ENCODE measurements at regions of chr7 and their contacts with region 1.

Region 1: GRCh38 chr7:135170274-135170997 is at the start of gene CYREN:
- DNase-seq: peak; percentile 97
- ATAC-seq: peak; percentile 94 to 97
- total RNA-seq, gene CYREN: 25.9 to 28.8 TPM

Region 2: DNA sequence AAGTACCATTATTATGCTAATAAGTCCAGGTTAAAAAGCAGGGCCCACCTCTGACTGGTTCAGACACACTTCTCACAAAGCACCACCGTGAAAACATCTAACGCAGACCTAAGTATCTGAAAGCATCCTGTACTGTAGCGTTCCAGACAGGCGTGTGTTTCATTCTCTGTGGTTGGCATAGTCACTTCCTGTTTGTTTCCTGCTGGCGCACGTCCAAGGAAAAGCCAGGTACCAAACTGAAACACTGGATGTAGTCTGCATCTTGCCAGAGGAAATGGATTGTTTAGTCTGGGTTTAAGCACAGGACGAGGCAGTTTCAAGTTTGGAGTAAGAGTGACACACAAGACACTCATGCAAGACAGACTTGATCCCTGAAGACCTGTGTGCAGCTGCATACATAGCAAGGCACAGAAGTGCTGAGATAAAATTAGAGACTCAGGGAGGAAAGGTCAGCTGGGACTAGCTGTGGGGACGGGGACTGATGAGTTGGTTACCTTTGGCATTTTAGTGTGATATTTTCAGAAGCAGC is 500.5 kb before region 1 on chr7:
- intact Hi-C with region 1: loop called in 1 of 2 experiments (anchors 10 kb)
- DNase-seq: peak; percentile 62
- ATAC-seq: peak; percentile 70 to 72

Region 3: GRCh38 chr7:134986363-134987251 is 183.8 kb before region 1 on chr7 and contains the start of gene AGBL3:
- intact Hi-C with region 1: loop called (anchors 2 to 10 kb)
- DNase-seq: peak; percentile 99
- ATAC-seq: peak; percentile 99
- total RNA-seq, gene AGBL3: 1.7 to 2.1 TPM

Region 4: DNA sequence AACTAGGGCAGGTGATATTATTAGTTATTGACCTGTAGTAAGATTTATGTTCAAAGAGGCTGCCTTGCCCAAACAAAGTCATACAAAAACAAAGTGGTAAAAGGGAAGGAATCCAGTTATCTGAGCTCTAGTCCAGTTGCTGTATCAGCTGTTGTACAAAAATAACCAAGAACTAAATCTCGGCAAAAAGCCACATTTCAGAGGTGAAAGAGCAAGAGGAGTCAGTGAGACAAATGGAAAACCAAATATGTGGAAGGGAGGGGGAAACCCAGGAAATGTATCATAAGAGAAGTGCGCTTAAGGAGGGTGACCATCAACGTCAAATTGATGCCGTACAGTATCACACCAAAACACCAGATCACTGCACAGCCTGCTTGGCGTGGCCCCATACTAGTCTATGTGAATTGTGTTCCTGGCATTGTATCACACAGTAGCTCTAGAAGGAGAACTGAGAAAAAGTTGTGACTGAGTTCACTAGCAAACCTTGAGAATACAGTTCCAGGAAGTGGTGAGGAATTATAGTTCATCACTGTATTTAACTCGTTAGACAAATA is 177.7 kb before region 1 on chr7:
- intact Hi-C with region 1: loop called (anchors 2 to 10 kb)
- DNase-seq: peak; percentile 24
- ATAC-seq: peak; percentile 48 to 64

Region 5: DNA sequence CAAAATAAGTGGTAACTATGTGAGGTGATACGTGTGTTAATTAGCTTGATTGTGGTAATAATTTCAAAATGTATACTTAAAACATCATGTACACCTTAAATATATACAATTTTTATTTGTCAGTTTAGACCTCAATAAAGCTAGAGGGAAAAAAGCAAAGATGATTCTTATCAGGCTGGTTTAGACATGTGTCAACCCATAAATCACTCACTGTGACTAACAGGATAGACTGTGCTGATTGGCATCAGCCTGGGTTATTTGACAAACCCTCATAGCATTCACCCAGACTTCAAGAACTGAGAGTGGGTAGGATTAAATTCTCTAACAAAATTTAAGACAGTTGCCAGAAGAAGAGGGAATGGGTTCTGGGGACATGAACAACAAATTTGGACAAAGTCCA is 96.4 kb before region 1 on chr7:
- intact Hi-C with region 1: no loop called
- DNase-seq: no peak
- ATAC-seq: no peak

Region 6: GRCh38 chr7:135102372-135102771 is 68.1 kb before region 1 on chr7:
- intact Hi-C with region 1: no loop called
- DNase-seq: no peak
- ATAC-seq: no peak